ENCODE measurements at regions of chr11 and their contacts with region 1.

Region 1: DNA sequence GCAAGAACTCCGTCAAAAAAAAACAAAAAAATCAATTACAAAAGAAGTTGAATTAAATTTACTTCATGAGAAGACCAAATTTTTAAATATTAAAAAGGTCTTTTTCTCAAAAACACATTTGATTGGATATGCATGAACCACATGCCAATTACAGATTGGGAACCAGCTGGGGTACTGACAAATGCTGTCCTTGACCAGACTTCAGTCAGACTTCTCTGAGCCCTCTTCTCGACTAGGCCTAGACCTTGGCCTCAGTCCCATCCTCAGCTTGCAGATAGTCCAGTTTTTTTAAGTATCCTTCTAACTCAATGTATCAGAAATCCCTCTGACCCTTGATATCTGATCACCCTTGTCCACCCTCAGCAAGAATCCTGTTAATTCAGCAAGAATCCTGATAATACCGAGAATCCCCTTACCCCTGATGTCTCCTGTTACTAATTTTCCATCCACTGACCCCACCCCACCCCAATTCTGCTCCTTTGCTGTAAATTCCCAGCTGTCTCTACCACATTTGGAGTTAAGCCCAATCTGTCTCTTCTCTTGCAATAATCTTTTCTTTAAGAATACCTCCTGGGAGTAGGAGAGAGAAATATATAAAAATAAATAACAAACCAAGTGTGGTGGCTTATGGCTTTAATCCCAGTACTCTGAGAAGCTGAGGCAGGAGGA is 30.9 kb downstream of the OR4D9 start:
- DNase-seq: no peak
- H3K4me3 ChIP-seq: no peak overlapping the region
- H3K27ac ChIP-seq: no peak overlapping the region
- H3K4me1 ChIP-seq: peaks cover 14% of the 10 kb centered on the region
- H3K27me3 ChIP-seq: no peaks in the 10 kb centered on the region
- CTCF ChIP-seq: no peak
- POLR2A ChIP-seq: no peak

Region 2: GRCh38 chr11:59523541-59523940 is 18.7 kb before region 1 on chr11:
- CTCF ChIA-PET with region 1: interaction called, 15 read pairs
- POLR2A ChIA-PET with region 1: no interaction called
- dilution Hi-C with region 1: no loop called
- intact Hi-C with region 1: no loop called
- DNase-seq: no peak
- H3K4me3 ChIP-seq: no peak overlapping the region
- H3K27ac ChIP-seq: no peak overlapping the region
- H3K4me1 ChIP-seq: no peaks in the 10 kb centered on the region
- H3K27me3 ChIP-seq: peaks cover 10% of the 10 kb centered on the region in 2 experiments
- CTCF ChIP-seq: peak in 1 of 2 donors; percentile 8
- POLR2A ChIP-seq: no peak

Region 3: GRCh38 chr11:59598961-59599360 is 56.7 kb after region 1 on chr11:
- CTCF ChIA-PET with region 1: interaction called, 14 read pairs
- POLR2A ChIA-PET with region 1: no interaction called
- dilution Hi-C with region 1: no loop called
- intact Hi-C with region 1: no loop called
- DNase-seq: no peak
- H3K4me3 ChIP-seq: no peak overlapping the region
- H3K27ac ChIP-seq: no peak overlapping the region
- H3K4me1 ChIP-seq: no peaks in the 10 kb centered on the region
- H3K27me3 ChIP-seq: no peaks in the 10 kb centered on the region
- CTCF ChIP-seq: no peak
- POLR2A ChIP-seq: no peak

Region 4: GRCh38 chr11:59668950-59669610 is 126.8 kb after region 1 on chr11 and contains the start of gene PATL1:
- CTCF ChIA-PET with region 1: interaction called, 9 read pairs
- POLR2A ChIA-PET with region 1: interaction called, 3 read pairs
- dilution Hi-C with region 1: no loop called
- intact Hi-C with region 1: loop called (anchors 1 kb)
- DNase-seq: peak; percentile 99
- H3K4me3 ChIP-seq: peak within 1 kb of the TSS; percentile 82 to 86 (median 82)
- H3K27ac ChIP-seq: peak within 1 kb of the TSS; percentile 97
- H3K4me1 ChIP-seq: peaks cover 18% of the 10 kb centered on the region
- H3K27me3 ChIP-seq: no peaks in the 10 kb centered on the region
- CTCF ChIP-seq: no peak
- POLR2A ChIP-seq: peak; percentile 95
- total RNA-seq, gene PATL1: 33.1 and 38.8 TPM in 2 replicates

Region 5: DNA sequence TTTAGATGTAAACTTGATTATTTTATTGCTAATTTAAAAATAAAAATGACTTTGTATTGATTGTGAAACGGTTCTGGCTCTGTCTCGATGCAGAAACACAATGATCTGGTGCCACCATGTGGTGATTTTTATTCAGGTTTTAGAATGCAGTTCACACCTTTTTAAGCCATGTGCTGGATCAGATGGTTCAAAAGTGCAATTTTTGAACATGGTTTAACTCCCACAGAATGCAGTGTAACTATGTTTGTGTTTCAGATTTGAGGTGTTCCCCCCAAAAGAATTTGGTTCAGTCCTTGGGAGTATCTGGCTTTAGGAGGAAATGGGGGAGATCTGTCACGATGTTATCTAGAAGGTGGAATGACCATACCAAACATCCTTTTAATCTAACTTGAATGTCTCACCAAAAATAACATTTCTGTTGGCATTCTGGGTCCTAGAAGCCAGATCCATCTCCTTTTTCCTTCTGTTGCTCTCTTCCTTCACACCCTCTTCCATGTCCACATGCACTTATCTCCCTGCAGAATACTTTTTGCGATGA is 260.4 kb after region 1 on chr11:
- CTCF ChIA-PET with region 1: interaction called, 4 read pairs
- POLR2A ChIA-PET with region 1: no interaction called
- dilution Hi-C with region 1: no loop called
- intact Hi-C with region 1: loop called (anchors 2 kb)
- DNase-seq: peak; percentile 79
- H3K4me3 ChIP-seq: no peak overlapping the region
- H3K27ac ChIP-seq: peak overlapping the region; percentile 83
- H3K4me1 ChIP-seq: peaks cover 9% of the 10 kb centered on the region
- H3K27me3 ChIP-seq: no peaks in the 10 kb centered on the region
- CTCF ChIP-seq: peak; percentile 34 to 47
- POLR2A ChIP-seq: no peak